Caco-2 (cell line): ENCODE measurements at regions of chr14 and their contacts with region 1.

Region 1: GRCh38 chr14:23953464-23954278 is at the start of gene DHRS4:
- DNase-seq: peak; percentile 80 to 83
- H3K4me3 ChIP-seq: peak within 1 kb of the TSS; percentile 76
- H3K4me3 Mint-ChIP-seq: peak within 1 kb of the TSS; percentile 96
- H3K27ac Mint-ChIP-seq: peak within 1 kb of the TSS; percentile 86
- H3K4me1 ChIP-seq: no peaks in the 10 kb centered on the region
- H3K4me1 Mint-ChIP-seq: no peaks in the 10 kb centered on the region
- H3K27me3 ChIP-seq: no peaks in the 10 kb centered on the region
- H3K27me3 Mint-ChIP-seq: no peaks in the 10 kb centered on the region
- CTCF ChIP-seq: peak; percentile 91 to 92
- total RNA-seq, gene DHRS4: 8.0 and 8.6 TPM in 2 replicates

Region 2: DNA sequence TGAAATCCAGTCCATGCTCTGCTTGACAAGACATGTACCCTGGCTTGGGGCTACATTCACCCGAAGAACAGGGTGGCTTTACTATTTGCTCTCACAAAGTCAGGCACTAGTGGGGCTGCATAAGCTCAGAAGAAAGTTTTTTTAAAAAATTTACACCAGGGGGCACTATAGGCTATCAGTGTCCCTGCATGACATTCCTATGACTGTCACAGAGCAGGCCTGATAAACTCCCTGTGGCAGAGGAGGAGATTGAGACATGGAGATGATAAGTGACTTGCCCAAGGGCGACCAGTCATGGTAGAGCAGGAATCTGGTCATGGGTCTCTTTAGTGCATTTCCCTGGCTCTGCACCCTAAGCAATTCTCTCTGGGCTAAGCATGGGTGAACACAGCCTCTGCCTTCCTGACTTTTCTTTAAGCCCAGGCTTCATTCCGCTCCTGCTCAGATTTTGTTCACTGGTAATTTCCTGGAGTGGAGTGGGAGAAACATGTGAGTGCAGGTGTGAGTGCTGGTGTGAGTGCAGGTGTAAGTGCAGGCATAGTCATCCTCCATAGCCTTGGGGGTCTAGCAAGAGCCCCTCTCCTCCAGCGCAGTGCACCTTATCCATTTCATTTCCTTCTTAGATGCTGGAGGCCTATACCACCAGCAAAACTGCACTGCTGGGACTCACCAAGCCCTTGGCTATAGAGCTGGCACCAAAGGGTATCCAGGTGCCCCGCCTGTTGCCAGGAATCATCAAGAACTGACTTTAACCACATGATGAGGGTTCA is 225.9 kb before region 1 on chr14:
- CTCF ChIA-PET with region 1: no interaction called
- POLR2A ChIA-PET with region 1: no interaction called
- intact Hi-C with region 1: loop called (anchors 1 kb)
- DNase-seq: peak; percentile 69 to 73
- H3K4me3 ChIP-seq: no peak overlapping the region
- H3K4me3 Mint-ChIP-seq: no peak overlapping the region
- H3K27ac Mint-ChIP-seq: no peak overlapping the region
- H3K4me1 ChIP-seq: no peaks in the 10 kb centered on the region
- H3K4me1 Mint-ChIP-seq: no peaks in the 10 kb centered on the region
- H3K27me3 ChIP-seq: no peaks in the 10 kb centered on the region; the same call in 1 of the 2 replicates
- H3K27me3 Mint-ChIP-seq: peaks cover 7% of the 10 kb centered on the region
- CTCF ChIP-seq: peak; percentile 55 to 72

Region 3: DNA sequence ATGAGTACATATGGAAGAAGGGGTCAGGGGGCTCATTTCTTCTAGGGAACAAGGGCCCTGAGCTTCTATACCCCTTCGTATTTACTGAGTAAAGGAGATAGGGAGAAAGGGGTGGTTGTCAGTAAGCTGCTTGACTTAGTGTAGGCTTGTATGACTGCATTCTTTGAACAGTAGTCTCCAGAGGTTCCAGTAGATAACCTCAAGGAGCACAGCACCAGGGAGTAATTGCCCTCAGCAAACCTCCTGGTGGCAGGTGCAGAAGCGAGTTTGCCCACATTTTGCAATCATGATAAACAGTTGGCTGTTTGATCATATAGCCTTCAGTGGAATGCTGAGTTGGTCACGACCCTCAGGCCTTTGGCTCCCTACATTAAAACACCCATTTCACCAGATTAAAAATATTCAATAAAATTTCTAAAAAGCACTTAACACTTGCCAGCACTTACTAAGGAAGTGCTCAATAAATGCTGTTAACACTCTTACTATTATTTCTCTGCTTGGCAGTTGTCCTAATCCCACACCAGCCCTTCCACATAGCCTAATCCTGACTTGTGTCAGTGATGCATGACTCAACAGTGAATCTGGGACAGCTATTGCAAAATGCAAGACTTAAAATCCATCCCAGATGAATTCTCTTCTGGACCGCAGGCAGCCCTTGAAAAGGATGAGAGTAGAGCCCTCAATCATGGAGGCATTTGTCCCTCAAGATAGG is 31.4 kb after region 1 on chr14:
- CTCF ChIA-PET with region 1: no interaction called
- POLR2A ChIA-PET with region 1: no interaction called
- intact Hi-C with region 1: no loop called
- DNase-seq: peak; percentile 37 to 60
- H3K4me3 ChIP-seq: no peak overlapping the region
- H3K4me3 Mint-ChIP-seq: no peak overlapping the region
- H3K27ac Mint-ChIP-seq: no peak overlapping the region
- H3K4me1 ChIP-seq: no peaks in the 10 kb centered on the region
- H3K4me1 Mint-ChIP-seq: no peaks in the 10 kb centered on the region
- H3K27me3 ChIP-seq: no peaks in the 10 kb centered on the region
- H3K27me3 Mint-ChIP-seq: no peaks in the 10 kb centered on the region
- CTCF ChIP-seq: no peak